ENCODE measurements at regions of chrX and their contacts with region 1.

Region 1: GRCh38 chrX:134173541-134174272 is 63.3 kb upstream of the CCDC160 start:
- DNase-seq: peak; percentile 26
- H3K4me3 Mint-ChIP-seq: peak overlapping the region; percentile 82
- H3K27ac Mint-ChIP-seq: peak overlapping the region; percentile 94
- H3K4me1 Mint-ChIP-seq: peaks cover 30% of the 10 kb centered on the region
- H3K27me3 Mint-ChIP-seq: peaks cover 8% of the 10 kb centered on the region

Region 2: GRCh38 chrX:134186362-134187121 is 12.8 kb after region 1 on chrX:
- CTCF ChIA-PET with region 1: interaction called, 6 read pairs
- POLR2A ChIA-PET with region 1: interaction called, 11 read pairs
- DNase-seq: peak; percentile 81
- H3K4me3 Mint-ChIP-seq: peak overlapping the region; percentile 74
- H3K27ac Mint-ChIP-seq: peak overlapping the region; percentile 85
- H3K4me1 Mint-ChIP-seq: peaks cover 40% of the 10 kb centered on the region
- H3K27me3 Mint-ChIP-seq: no peaks in the 10 kb centered on the region

Region 3: DNA sequence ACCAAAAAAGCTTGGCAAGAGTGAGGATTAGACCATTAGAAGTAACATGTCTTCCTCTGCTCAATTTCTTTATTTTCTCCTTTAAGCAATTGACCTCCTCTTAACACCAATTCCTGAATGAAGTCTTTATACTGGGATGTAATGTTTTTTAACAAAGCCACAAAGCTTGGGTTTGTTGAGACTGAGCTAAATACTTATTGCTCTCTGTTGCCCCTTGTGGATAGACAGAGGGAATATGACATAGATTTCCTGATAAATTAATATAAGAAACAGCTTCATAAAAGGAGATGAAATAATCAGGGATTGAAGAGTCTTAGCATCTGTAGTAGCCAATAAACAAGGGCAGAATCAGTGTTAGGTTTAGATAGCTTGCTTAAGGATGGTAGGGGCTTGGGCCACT is 120.8 kb after region 1 on chrX:
- CTCF ChIA-PET with region 1: no interaction called
- POLR2A ChIA-PET with region 1: no interaction called
- DNase-seq: no peak
- H3K4me3 Mint-ChIP-seq: no peak overlapping the region
- H3K27ac Mint-ChIP-seq: no peak overlapping the region
- H3K4me1 Mint-ChIP-seq: no peaks in the 10 kb centered on the region
- H3K27me3 Mint-ChIP-seq: peaks cover 7% of the 10 kb centered on the region